ENCODE measurements at regions of chr1 and their contacts with region 1.

Region 1: DNA sequence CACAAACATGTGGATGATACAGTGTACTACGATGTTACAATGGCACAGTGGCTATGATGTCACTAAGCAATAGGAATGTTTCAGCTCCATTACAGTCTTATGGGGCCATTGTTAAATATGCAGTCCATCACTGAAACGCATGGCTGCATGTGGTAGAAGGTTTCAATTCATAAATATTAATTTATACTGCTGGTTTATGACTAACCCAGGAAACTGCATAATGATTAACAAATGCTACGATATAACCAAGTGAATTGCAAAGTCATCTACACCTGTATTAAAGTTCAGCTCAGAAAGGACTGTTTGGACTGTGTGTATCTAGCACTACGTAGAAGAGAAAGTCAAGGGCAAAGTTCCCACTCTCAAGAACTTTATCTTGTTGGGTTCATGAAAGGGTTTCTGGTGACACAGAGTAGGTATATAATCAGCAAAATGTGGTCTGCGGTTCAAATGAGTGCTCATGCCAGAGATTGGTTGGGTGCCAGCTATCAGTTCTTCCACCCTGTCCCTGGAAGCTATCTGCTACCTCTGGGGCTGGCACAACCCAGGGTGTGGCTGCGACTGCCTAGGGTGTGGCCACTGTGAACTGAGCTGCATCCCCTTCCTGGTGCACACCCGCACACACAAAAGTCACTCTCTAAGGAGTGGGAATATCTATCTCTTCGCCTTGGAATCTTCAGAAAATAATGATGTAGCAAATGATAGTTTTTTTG is 14.8 kb downstream of the MGST3 start:
- DNase-seq: peak; percentile 88
- H3K4me3 ChIP-seq: no peak overlapping the region
- H3K27ac ChIP-seq: peak overlapping the region; percentile 57 to 78 (median 74)
- H3K4me1 ChIP-seq: peaks cover 19 to 63% (median 42%) of the 10 kb centered on the region in 4 donors
- H3K27me3 ChIP-seq: no peaks in the 10 kb centered on the region
- CTCF ChIP-seq: peak in 1 of 5 experiments; percentile 14
- EP300 ChIP-seq: peak; percentile 13
- POLR2A ChIP-seq: no peak

Region 2: GRCh38 chr1:165697881-165698760 is 52.3 kb after region 1 on chr1 and contains the start of gene ALDH9A1:
- in situ Hi-C with region 1: no loop called
- intact Hi-C with region 1: loop called (anchors 10 kb)
- DNase-seq: peak; percentile 93
- H3K4me3 ChIP-seq: peak within 1 kb of the TSS; percentile 67 to 69 (median 67)
- H3K27ac ChIP-seq: peak within 1 kb of the TSS; percentile 93 to 96 (median 96)
- H3K4me1 ChIP-seq: peaks cover 13 to 29% (median 20%) of the 10 kb centered on the region in 4 donors
- H3K27me3 ChIP-seq: no peaks in the 10 kb centered on the region
- CTCF ChIP-seq: peak in 4 of 5 experiments; percentile 13 to 48 (median 22)
- EP300 ChIP-seq: no peak
- POLR2A ChIP-seq: peak; percentile 80
- total RNA-seq, gene ALDH9A1: 15.3 to 103 (median 59.5) TPM

Region 3: GRCh38 chr1:165857046-165857801 is 211.4 kb after region 1 on chr1:
- in situ Hi-C with region 1: no loop called
- intact Hi-C with region 1: no loop called
- DNase-seq: no peak
- H3K4me3 ChIP-seq: no peak overlapping the region
- H3K27ac ChIP-seq: peak overlapping the region; percentile 69 to 85 (median 74)
- H3K4me1 ChIP-seq: peaks cover 12 to 81% (median 53%) of the 10 kb centered on the region in 4 donors
- H3K27me3 ChIP-seq: no peaks in the 10 kb centered on the region
- CTCF ChIP-seq: no peak
- EP300 ChIP-seq: no peak
- POLR2A ChIP-seq: no peak

Measured in transverse colon (tissue), 4 donors.